ENCODE measurements at regions of chr2 and their contacts with region 1.

Region 1: DNA sequence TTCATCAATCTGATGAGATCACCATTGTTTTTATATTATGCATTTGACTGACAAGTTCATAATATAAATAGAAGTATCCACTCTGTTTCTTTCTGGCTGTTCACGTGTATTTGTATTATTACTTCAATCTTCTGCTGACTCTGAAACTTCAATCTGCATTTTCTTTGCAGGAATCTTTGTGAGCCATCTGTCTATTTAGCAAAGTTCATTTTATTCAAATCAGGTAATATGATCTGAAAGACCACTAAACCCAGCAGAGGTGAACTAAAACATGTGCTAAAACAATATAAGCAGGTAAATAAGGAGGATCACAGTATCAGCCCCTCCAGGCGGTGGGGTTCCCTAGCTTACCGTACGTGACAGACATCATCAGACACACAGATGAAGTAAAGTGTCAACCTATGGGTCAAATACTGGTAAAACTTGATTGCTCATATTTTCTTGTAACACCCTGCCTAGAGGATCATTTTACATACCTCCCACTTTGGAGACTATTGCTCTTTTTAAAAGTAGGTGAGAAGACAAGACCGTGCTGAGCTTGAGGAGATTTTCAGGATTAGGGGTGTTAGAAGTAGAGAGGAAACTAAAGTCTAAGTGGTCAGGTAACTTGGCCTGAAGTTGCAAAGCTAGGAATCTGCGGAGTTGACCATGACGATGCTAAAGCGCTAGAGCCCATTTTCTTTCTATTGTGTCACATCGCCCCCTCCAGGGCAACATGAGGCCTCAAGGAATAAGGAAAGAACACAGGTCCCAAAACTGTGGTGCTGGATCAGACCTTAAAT is 9.0 kb downstream of the DTNB start:
- DNase-seq: peak; percentile 56 to 72 (median 66)
- H3K4me3 ChIP-seq: no peak overlapping the region
- H3K27ac ChIP-seq: no peak overlapping the region
- H3K4me1 ChIP-seq: peaks cover 5% of the 10 kb centered on the region
- H3K27me3 ChIP-seq: no peaks in the 10 kb centered on the region
- CTCF ChIP-seq: peak; percentile 30 to 66 (median 47)
- EP300 ChIP-seq: no peak
- POLR2A ChIP-seq: no peak

Region 2: GRCh38 chr2:25606892-25607291 is 57.5 kb before region 1 on chr2:
- intact Hi-C with region 1: loop called in 2 of 4 experiments (anchors 10 kb)
- DNase-seq: no peak
- H3K4me3 ChIP-seq: no peak overlapping the region
- H3K27ac ChIP-seq: no peak overlapping the region
- H3K4me1 ChIP-seq: no peaks in the 10 kb centered on the region
- H3K27me3 ChIP-seq: no peaks in the 10 kb centered on the region
- CTCF ChIP-seq: peak; percentile 29 to 72 (median 50)
- EP300 ChIP-seq: no peak
- POLR2A ChIP-seq: no peak

Region 3: GRCh38 chr2:25618642-25619037 is 45.7 kb before region 1 on chr2:
- intact Hi-C with region 1: loop called in 1 of 4 experiments (anchors 10 kb)
- DNase-seq: no peak
- H3K4me3 ChIP-seq: no peak overlapping the region
- H3K27ac ChIP-seq: peak overlapping the region in 1 of 2 donors; percentile 41
- H3K4me1 ChIP-seq: peaks cover 5% of the 10 kb centered on the region
- H3K27me3 ChIP-seq: no peaks in the 10 kb centered on the region
- CTCF ChIP-seq: no peak
- EP300 ChIP-seq: no peak
- POLR2A ChIP-seq: no peak

Region 4: GRCh38 chr2:25700221-25700660 is 35.9 kb after region 1 on chr2:
- intact Hi-C with region 1: no loop called
- DNase-seq: no peak
- H3K4me3 ChIP-seq: no peak overlapping the region
- H3K27ac ChIP-seq: no peak overlapping the region
- H3K4me1 ChIP-seq: no peaks in the 10 kb centered on the region
- H3K27me3 ChIP-seq: no peaks in the 10 kb centered on the region
- CTCF ChIP-seq: peak; percentile 31 to 53 (median 41)
- EP300 ChIP-seq: no peak
- POLR2A ChIP-seq: no peak

Measured in ovary (tissue), 10 donors.